Heart left ventricle (tissue), 16 donors: ENCODE measurements at regions of chrX and their contacts with region 1.

Region 1: DNA sequence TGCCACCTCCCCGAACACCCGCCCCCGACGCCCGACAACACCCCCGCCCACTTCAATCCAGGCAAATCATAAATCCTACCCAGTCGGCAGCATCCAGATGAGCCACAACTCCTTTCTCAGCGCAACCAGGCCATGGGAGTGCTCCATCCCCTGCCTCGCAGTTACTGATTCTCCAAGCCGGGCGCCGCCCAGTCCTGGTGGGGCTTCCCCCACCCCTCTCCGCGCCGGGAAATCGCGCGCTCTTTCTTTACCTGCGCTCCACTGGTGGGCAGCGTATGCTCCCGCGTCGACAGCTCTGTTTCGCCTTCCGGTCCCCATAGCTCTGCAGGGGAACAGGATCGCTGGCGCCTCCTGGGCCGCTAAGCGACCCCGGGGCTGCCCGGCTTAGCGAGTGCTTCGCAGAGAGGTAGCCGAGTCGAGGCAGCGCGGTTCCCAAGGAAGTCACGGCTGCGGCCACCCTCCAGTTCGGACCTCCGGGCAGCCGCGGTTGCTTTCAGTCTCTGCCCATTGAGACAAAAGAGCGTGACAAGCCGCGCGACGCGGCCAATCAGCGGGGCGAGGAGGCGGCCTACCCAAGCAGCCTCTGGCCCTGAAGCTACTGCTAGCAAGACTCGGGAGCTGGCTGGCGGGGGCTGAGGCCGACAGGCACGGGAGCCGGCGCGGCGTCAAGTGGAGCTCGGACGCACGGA is 43.7 kb upstream of the TMSB15B start:
- DNase-seq: peak; percentile 45 to 79 (median 69)
- ATAC-seq: peak; percentile 75 to 92 (median 90)
- H3K4me3 ChIP-seq: peak overlapping the region in 11 of 12 donors; percentile 27 to 82 (median 59)
- H3K27ac ChIP-seq: peak overlapping the region; percentile 4 to 82 (median 68)
- H3K4me1 ChIP-seq: peaks cover 0 to 7% (median 0%) of the 10 kb centered on the region in 12 donors
- H3K27me3 ChIP-seq: peaks cover 0 to 21% (median 0%) of the 10 kb centered on the region in 9 donors
- CTCF ChIP-seq: no peak
- POLR2A ChIP-seq: no peak

Region 2: GRCh38 chrX:103431316-103431715 is 487.4 kb before region 1 on chrX:
- intact Hi-C with region 1: no loop called
- DNase-seq: no peak
- ATAC-seq: no peak
- H3K4me3 ChIP-seq: no peak overlapping the region
- H3K27ac ChIP-seq: no peak overlapping the region
- H3K4me1 ChIP-seq: no peaks in the 10 kb centered on the region
- H3K27me3 ChIP-seq: no peaks in the 10 kb centered on the region
- CTCF ChIP-seq: no peak
- POLR2A ChIP-seq: no peak

Region 3: GRCh38 chrX:103845165-103845653 is 73.5 kb before region 1 on chrX:
- intact Hi-C with region 1: loop called in 1 of 10 experiments (anchors 2 kb)
- DNase-seq: peak in 4 of 5 donors; percentile 28 to 55 (median 46)
- ATAC-seq: peak in 3 of 4 donors; percentile 57 to 78 (median 73)
- H3K4me3 ChIP-seq: peak overlapping the region in 1 of 12 donors; percentile 5
- H3K27ac ChIP-seq: no peak overlapping the region
- H3K4me1 ChIP-seq: peaks cover 0 to 6% (median 0%) of the 10 kb centered on the region in 12 donors
- H3K27me3 ChIP-seq: peaks cover 0 to 21% (median 0%) of the 10 kb centered on the region in 9 donors
- CTCF ChIP-seq: peak; percentile 39 to 67 (median 56)
- POLR2A ChIP-seq: no peak